ENCODE measurements at regions of chr16 and their contacts with region 1.

Region 1: DNA sequence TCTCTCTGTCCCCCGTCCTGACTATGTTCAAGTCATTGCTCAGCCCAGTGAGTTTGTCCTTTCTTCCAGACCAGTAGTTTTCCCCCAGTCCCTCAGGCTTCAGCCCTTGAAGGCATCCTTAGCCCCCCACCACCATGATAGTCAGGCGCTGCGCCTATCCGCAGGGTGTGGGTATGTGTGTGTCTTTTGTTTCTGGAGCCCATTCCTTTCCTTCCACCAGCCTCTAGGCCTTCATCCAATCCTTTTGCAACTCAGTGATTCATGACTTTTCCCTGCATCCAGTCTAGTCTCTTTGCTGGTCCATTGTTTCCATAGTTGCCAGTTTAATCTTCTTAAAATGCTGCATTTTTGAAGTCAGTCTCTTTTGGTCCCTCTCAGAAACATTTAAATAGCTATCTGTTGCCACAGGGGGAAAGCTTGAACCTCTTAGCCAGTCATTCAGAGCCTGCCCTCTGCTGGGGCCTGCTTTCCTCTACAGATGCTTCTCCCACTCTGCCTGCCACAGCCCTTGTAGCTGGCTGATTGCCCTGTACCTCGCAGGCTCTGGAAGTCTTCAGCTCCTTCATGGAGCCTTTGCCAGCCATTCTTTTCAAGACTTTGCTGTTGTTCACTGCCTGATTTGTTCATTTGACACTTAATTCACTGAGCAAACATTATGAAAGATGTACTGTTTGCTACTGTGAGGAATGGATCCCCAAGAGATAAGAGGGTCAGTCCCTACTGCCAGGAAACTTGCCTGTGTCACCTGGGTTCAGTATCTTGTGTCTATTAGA is 55.9 kb upstream of the ADCY7 start:
- DNase-seq: peak; percentile 86

Region 2: GRCh38 chr16:50024684-50025536 is 185.5 kb before region 1 on chr16 and contains the start of gene CNEP1R1:
- intact Hi-C with region 1: loop called (anchors 2 kb)
- DNase-seq: peak; percentile 96
- total RNA-seq, gene CNEP1R1: 17.9 TPM

Region 3: GRCh38 chr16:50065624-50066481 is 144.6 kb before region 1 on chr16 and contains the start of gene HEATR3:
- intact Hi-C with region 1: loop called (anchors 2 kb)
- DNase-seq: peak; percentile 98
- total RNA-seq, gene HEATR3: 10.3 TPM

Region 4: DNA sequence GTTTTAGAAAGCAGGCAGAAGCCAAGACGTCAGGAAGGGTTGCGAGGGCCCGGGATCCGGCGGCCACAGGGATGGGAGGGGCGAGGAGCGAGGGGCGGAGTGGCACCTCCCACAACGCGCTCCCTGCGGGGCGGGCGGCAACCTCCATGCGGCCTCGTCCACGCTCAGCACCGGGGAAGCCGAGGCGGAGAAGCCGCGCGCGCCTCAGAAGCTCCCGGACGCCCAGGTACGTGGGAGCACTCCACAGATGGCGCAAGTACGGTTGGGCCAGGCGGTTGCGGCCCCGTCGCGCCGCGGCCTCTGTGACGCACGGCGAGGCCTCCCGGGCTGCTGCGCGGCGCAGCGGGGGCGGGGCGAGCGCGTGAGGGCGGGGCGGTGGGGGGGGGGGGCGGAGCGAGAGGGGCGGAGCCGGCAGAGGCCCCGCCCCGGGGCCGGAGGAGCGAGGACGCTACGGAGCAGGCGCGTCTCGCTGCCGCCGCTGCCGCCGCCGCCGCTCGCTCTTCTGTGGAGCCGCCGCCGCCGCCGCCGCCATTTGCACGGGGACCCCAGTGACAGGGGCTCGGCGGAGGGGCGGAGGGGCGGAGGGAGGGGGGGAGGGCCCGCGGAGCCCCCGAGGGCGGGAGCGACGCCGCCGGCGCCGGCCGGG is 57.5 kb before region 1 on chr16 and contains the start of gene TENT4B:
- intact Hi-C with region 1: loop called (anchors 2 kb)
- DNase-seq: peak; percentile 95
- total RNA-seq, gene TENT4B: 9.1 TPM

Region 5: GRCh38 chr16:50665128-50665878 is 454.9 kb after region 1 on chr16:
- intact Hi-C with region 1: loop called (anchors 5 kb)
- DNase-seq: peak; percentile 93

Measured in cardiac septum (tissue), 1 donor.